Activated CD4-positive, alpha-beta memory T cell treated with anti-CD3 and anti-CD28 coated beads for 36 hours (primary cell): ENCODE measurements at regions of chr12 and their contacts with region 1.

Region 1: DNA sequence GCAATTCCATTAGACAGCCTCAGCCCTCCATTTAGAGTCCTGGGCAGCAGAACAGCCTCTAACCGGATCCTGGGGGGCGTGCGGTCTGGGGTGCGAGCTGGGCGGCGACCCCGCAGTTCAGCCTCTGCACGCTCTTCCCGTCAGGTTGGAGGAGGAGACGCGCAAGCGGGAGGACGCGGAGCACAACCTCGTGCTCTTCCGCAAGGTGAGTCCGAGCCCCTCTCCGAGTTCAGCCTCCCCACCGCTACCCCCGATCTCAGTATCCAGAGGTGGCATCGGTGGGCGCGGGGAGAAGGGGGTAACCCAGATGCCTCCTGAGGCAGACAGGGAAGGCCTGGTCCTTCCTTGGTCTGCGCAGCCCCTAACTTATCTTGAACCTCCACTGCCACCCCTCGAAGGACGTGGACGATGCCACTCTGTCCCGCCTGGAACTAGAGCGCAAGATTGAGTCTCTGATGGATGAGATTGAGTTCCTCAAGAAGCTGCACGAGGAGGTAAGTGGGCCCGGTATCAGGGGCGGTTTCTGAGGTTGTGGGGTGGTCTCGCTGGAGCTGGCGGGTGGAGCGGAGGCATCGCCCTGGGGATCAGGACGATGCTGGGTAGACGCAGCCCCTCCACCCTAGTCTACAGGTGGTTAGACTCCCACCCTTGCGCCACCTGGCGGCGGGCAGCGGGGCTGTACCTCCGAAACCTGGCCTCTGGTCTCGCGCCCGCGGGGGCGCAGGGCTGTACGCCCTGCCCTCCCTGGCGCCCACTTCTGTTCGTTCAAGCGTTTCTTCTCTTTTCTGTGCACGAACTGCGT is 1.3 kb downstream of the PRPH start:
- DNase-seq: peak; percentile 75
- H3K4me3 Mint-ChIP-seq: no peak overlapping the region
- H3K27ac Mint-ChIP-seq: no peak overlapping the region
- H3K4me1 Mint-ChIP-seq: peaks cover 12% of the 10 kb centered on the region
- H3K27me3 Mint-ChIP-seq: peaks cover 51% of the 10 kb centered on the region

Region 2: DNA sequence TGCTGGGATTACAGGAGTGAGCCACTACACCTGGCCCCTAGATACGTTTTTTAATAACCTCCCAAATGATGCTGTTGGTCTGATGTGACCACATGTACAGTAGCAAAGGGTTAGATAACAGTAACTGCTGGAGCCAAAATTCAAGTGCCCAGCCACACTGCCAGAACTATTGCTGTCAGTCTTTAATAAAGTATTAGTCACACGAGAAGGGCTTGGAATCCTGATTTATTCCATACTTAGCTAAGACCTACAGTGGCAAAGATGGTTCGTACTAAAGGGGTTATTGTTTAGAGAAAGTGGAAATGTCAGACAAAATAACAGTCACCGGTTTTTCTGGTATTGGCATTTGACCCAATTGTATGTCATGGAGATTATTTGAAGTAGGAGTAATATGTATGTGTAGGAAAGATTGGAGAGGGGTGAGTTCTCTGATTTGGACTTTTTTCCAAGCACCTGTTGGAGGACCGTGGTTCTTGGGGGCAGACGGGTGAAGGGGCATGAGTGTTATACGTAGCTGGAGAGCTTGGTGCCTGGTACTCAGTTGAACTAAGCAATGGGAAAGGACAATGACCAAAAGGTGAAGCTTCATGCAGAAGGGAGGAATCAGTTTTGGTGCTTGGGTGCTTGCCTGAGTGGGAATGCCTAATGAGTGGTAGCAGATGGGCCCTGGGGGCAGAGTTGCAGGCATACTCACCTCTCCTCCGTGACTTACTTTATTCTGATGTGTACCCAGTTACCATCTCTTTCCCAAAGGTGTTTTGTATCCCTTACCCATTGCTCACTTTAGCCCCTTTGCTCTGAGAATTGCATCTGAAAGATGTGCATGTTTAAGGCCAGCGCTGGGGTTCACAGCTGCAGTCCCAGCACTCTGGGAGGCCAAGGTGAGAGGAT is 21.6 kb before region 1 on chr12:
- CTCF ChIA-PET with region 1: interaction called, 14 read pairs
- POLR2A ChIA-PET with region 1: no interaction called
- intact Hi-C with region 1: no loop called
- DNase-seq: no peak
- H3K4me3 Mint-ChIP-seq: no peak overlapping the region
- H3K27ac Mint-ChIP-seq: no peak overlapping the region
- H3K4me1 Mint-ChIP-seq: peaks cover 6% of the 10 kb centered on the region
- H3K27me3 Mint-ChIP-seq: no peaks in the 10 kb centered on the region

Region 3: DNA sequence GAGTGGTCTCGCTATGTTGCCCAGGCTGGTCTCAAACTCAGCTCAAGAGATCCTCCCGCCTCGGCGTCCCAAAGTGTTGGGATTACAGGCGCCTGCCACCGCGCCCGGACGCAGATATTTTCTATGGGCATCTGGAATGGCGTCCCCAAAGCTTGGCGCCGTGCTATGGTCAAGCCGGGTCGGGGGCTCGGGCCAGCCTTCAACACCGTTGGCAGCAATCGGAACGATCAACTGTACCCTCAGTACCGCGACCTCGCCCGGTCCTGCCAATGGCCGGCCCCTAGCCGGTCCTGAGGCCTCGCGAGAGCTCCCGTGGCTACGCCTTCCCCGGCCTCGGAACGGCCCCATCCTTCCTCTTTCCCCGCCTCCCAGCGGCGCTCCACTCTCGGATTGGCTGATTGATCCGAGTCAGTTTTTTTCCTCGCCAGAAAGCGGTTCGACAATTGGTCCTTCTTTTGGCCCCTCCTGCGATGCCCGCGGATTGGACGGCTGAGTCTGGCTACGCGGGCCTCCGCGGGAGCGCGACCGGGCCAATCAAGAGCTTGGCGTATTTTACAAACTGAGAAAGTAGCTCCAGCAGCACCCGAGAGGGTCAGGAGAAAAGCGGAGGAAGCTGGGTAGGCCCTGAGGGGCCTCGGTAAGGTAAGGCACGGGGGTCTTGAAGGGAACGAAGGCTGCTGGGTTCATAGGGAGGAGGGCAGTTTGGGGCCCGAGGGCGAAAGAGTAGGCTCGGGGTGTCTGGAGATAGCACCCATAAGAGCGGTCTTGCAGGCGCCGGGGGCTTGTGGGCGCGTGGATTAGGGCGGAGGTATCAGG is 26.7 kb after region 1 on chr12 and contains the start of gene TROAP:
- CTCF ChIA-PET with region 1: interaction called, 18 read pairs
- POLR2A ChIA-PET with region 1: interaction called, 6 read pairs
- intact Hi-C with region 1: loop called (anchors 1 kb)
- DNase-seq: peak; percentile 99
- H3K4me3 Mint-ChIP-seq: peak within 1 kb of the TSS; percentile 99
- H3K27ac Mint-ChIP-seq: peak within 1 kb of the TSS; percentile 90
- H3K4me1 Mint-ChIP-seq: peaks cover 19% of the 10 kb centered on the region
- H3K27me3 Mint-ChIP-seq: no peaks in the 10 kb centered on the region
- total RNA-seq, gene TROAP: 57.7 to 64.9 TPM

Region 4: DNA sequence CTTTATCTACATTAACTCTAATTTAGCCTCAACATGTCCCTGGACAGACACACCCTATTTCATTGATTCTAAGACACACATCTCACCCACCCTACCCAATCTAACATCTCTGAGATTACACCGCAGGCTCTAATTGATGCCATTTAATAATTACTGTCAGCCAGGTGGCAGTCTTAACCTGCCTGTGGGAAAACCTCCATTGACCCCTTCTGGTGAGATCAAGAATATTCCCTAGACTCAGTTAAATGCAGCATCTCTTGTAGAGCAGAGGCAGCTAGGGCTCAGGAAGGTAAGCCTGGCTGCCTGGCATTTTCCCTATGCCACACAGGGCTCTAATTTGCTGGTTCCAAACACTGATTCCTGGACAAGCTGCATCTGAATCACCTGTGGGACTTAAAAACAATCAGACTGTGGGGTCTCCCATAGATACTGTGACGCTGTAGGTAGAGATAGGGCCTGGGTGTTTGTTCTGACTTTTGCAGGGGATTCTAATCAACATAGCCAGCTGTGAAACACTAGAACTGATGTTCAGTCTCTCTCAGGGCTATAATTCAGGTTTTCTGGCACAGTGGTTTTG is 257.4 kb after region 1 on chr12:
- CTCF ChIA-PET with region 1: no interaction called
- POLR2A ChIA-PET with region 1: no interaction called
- intact Hi-C with region 1: no loop called
- DNase-seq: no peak
- H3K4me3 Mint-ChIP-seq: no peak overlapping the region
- H3K27ac Mint-ChIP-seq: no peak overlapping the region
- H3K4me1 Mint-ChIP-seq: peaks cover 3% of the 10 kb centered on the region
- H3K27me3 Mint-ChIP-seq: peaks cover 4% of the 10 kb centered on the region